Activated CD4-positive, alpha-beta memory T cell treated with anti-CD3 and anti-CD28 coated beads for 36 hours (primary cell): ENCODE measurements at regions of chr9 and their contacts with region 1.

Region 1: GRCh38 chr9:73116031-73116430 is 35.6 kb upstream of the ANXA1 start:
- DNase-seq: no peak
- H3K4me3 Mint-ChIP-seq: no peak overlapping the region
- H3K27ac Mint-ChIP-seq: no peak overlapping the region
- H3K4me1 Mint-ChIP-seq: peaks cover 42% of the 10 kb centered on the region
- H3K27me3 Mint-ChIP-seq: no peaks in the 10 kb centered on the region

Region 2: GRCh38 chr9:73132034-73132776 is 16.2 kb after region 1 on chr9:
- CTCF ChIA-PET with region 1: interaction called, 4 read pairs
- POLR2A ChIA-PET with region 1: interaction called, 10 read pairs
- intact Hi-C with region 1: loop called (anchors 1 kb)
- DNase-seq: peak; percentile 80
- H3K4me3 Mint-ChIP-seq: peak overlapping the region; percentile 78
- H3K27ac Mint-ChIP-seq: peak overlapping the region; percentile 88
- H3K4me1 Mint-ChIP-seq: peaks cover 35% of the 10 kb centered on the region
- H3K27me3 Mint-ChIP-seq: no peaks in the 10 kb centered on the region

Region 3: GRCh38 chr9:73154760-73155159 is 38.7 kb after region 1 on chr9:
- CTCF ChIA-PET with region 1: interaction called, 4 read pairs
- POLR2A ChIA-PET with region 1: interaction called, 4 read pairs
- intact Hi-C with region 1: loop called (anchors 1 kb)
- DNase-seq: no peak
- H3K4me3 Mint-ChIP-seq: peak overlapping the region; percentile 83
- H3K27ac Mint-ChIP-seq: peak overlapping the region; percentile 75
- H3K4me1 Mint-ChIP-seq: peaks cover 76% of the 10 kb centered on the region
- H3K27me3 Mint-ChIP-seq: no peaks in the 10 kb centered on the region